ENCODE measurements at regions of chr13 and their contacts with region 1.

Region 1: DNA sequence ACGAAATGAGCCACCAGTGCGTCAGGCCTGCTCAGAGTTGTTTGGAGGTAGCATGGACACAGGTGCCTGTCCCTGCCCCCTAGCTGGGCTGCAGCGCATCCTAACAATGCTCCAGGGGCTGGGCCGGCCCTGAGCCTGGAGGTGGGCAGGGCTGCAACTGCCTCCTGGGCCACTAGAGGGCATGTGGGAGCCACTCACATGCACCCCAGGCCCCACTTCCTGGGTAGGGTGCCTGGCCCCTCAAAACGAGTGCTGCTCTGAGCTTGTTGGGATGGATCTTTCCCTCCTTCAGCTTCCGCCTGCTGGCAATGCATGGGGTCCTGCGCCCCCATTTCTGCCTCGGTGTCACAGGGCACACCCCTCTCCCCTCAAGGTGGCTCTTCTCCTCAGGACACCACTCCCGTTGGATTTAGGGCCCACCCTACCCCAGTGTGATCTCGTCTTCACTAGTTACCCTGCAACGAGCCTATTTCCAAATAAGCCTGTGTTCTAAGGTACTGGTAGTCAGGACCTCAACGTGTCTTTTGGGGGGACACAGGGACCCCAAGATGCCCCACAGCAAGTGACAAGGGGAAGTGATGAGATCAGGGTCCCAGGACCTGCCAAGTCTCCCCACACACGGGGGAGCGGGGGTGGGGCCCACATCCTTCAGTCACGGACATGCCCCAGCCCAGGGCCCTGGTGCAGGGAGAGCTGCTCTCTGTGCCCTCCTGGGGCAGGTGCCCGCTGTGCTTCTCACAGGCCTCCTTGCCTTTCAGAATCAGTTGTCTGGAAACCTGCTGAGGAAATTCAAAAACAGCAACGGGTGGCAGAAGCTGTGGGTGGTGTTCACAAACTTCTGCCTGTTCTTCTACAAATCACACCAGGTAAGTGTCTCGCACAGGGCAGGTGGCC is 131.3 kb downstream of the STK24 start:
- DNase-seq: peak; percentile 66 to 82 (median 73)
- H3K4me3 ChIP-seq: no peak overlapping the region
- H3K4me3 Mint-ChIP-seq: peak overlapping the region; percentile 15 to 84 (median 73)
- H3K27ac ChIP-seq: no peak overlapping the region
- H3K27ac Mint-ChIP-seq: peak overlapping the region; percentile 74 to 91 (median 83)
- H3K4me1 ChIP-seq: peaks cover 11% of the 10 kb centered on the region
- H3K4me1 Mint-ChIP-seq: peaks cover 10 to 23% (median 13%) of the 10 kb centered on the region in 3 donors
- H3K27me3 ChIP-seq: no peaks in the 10 kb centered on the region
- H3K27me3 Mint-ChIP-seq: peaks cover 0 to 1% of the 10 kb centered on the region in 2 donors

Region 2: GRCh38 chr13:98083507-98083906 is 362.1 kb before region 1 on chr13:
- CTCF ChIA-PET with region 1: no interaction called
- POLR2A ChIA-PET with region 1: no interaction called
- DNase-seq: no peak
- H3K4me3 ChIP-seq: no peak overlapping the region
- H3K4me3 Mint-ChIP-seq: no peak overlapping the region
- H3K27ac ChIP-seq: no peak overlapping the region
- H3K27ac Mint-ChIP-seq: no peak overlapping the region
- H3K4me1 ChIP-seq: no peaks in the 10 kb centered on the region
- H3K4me1 Mint-ChIP-seq: no peaks in the 10 kb centered on the region
- H3K27me3 ChIP-seq: no peaks in the 10 kb centered on the region
- H3K27me3 Mint-ChIP-seq: peaks cover 9 to 10% of the 10 kb centered on the region in 2 donors

Region 3: DNA sequence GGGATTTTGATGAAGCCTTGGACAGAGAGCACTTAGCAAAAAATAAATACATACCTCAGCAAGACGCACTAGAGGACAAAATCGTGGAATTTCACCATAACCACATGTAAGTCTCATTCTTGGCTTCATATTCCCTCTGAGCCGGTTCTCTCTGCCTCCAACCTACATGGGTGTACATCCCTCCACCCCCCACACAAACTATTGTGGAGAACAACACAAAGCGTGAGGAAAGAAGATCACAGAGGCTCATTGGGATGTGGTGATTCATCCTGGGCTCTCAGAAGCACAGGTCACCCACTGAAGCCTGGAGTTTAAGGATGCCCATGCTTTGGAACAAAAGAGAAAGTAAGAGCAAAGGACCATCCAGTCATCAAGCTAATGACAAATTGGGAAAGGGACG is 60.8 kb before region 1 on chr13:
- CTCF ChIA-PET with region 1: no interaction called
- POLR2A ChIA-PET with region 1: no interaction called
- DNase-seq: no peak
- H3K4me3 ChIP-seq: no peak overlapping the region
- H3K4me3 Mint-ChIP-seq: no peak overlapping the region
- H3K27ac ChIP-seq: no peak overlapping the region
- H3K27ac Mint-ChIP-seq: peak overlapping the region in 2 of 8 donors; percentile 27
- H3K4me1 ChIP-seq: no peaks in the 10 kb centered on the region
- H3K4me1 Mint-ChIP-seq: peaks cover 0 to 5% (median 0%) of the 10 kb centered on the region in 3 donors
- H3K27me3 ChIP-seq: no peaks in the 10 kb centered on the region
- H3K27me3 Mint-ChIP-seq: peaks cover 5 to 56% of the 10 kb centered on the region in 2 donors

Region 4: DNA sequence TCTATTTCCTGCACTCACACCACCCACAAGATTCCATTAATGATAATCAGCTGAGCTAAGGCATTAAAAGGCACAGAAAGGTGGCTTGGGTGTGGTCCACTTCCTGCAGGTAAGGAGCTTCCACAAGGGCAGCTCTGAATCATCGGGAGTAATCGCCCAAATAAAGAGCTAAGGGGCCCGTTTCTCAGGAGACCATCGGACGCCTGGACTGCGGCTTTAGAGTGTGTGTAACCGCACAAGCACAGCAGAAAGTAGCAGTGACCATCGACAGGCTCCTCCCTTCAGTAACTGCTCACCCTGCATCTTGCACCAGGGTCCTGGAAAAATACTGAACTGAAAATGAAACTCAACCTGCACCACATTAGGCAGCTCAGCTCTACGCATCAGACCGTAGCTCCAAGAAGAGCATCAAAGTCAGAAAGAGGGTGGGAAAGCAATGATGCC is 125.4 kb after region 1 on chr13:
- CTCF ChIA-PET with region 1: interaction called, 12 read pairs
- POLR2A ChIA-PET with region 1: no interaction called
- DNase-seq: peak in 4 of 5 donors; percentile 25 to 56 (median 54)
- H3K4me3 ChIP-seq: peak overlapping the region; percentile 70
- H3K4me3 Mint-ChIP-seq: peak overlapping the region; percentile 83 to 95 (median 94)
- H3K27ac ChIP-seq: peak overlapping the region; percentile 58
- H3K27ac Mint-ChIP-seq: peak overlapping the region; percentile 89 to 98 (median 97)
- H3K4me1 ChIP-seq: peaks cover 90% of the 10 kb centered on the region
- H3K4me1 Mint-ChIP-seq: peaks cover 91 to 98% (median 96%) of the 10 kb centered on the region in 3 donors
- H3K27me3 ChIP-seq: no peaks in the 10 kb centered on the region
- H3K27me3 Mint-ChIP-seq: no peaks in the 10 kb centered on the region

Region 5: GRCh38 chr13:98648141-98648540 is 202.6 kb after region 1 on chr13:
- CTCF ChIA-PET with region 1: interaction called, 151 read pairs
- POLR2A ChIA-PET with region 1: interaction called, 8 read pairs
- DNase-seq: no peak
- H3K4me3 ChIP-seq: no peak overlapping the region
- H3K4me3 Mint-ChIP-seq: no peak overlapping the region
- H3K27ac ChIP-seq: no peak overlapping the region
- H3K27ac Mint-ChIP-seq: no peak overlapping the region
- H3K4me1 ChIP-seq: no peaks in the 10 kb centered on the region
- H3K4me1 Mint-ChIP-seq: peaks cover 0 to 3% (median under 1%) of the 10 kb centered on the region in 3 donors
- H3K27me3 ChIP-seq: no peaks in the 10 kb centered on the region
- H3K27me3 Mint-ChIP-seq: peaks cover 7 to 18% of the 10 kb centered on the region in 2 donors

Region 6: DNA sequence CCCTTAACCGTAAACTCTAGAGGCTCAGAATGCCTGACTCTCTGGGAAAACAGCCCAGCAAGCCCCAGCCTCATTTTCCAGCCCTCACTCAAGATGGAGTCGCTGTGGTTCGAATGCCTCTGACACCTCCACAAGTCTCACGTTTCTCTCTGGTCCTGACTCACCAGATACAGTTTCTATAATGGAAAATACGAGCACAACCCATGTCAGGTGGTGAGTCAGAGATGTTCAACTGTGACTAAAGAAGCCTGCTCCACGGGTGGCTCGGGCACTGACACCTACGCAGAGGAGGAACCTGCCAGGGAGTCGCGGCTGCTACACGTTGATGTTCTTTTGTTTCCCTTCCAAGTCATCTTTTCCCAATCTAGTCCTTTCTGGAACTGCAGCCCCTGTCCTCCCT is 218.5 kb after region 1 on chr13:
- CTCF ChIA-PET with region 1: interaction called, 13 read pairs
- POLR2A ChIA-PET with region 1: no interaction called
- DNase-seq: no peak
- H3K4me3 ChIP-seq: no peak overlapping the region
- H3K4me3 Mint-ChIP-seq: peak overlapping the region in 1 of 7 donors; percentile 28
- H3K27ac ChIP-seq: no peak overlapping the region
- H3K27ac Mint-ChIP-seq: no peak overlapping the region
- H3K4me1 ChIP-seq: no peaks in the 10 kb centered on the region
- H3K4me1 Mint-ChIP-seq: peaks cover 3 to 7% (median 6%) of the 10 kb centered on the region in 3 donors
- H3K27me3 ChIP-seq: no peaks in the 10 kb centered on the region
- H3K27me3 Mint-ChIP-seq: peaks cover 4 to 11% of the 10 kb centered on the region in 2 donors

Measured in CD8-positive, alpha-beta memory T cell (primary cell).